ENCODE measurements at regions of chr10 and their contacts with region 1.

Region 1: DNA sequence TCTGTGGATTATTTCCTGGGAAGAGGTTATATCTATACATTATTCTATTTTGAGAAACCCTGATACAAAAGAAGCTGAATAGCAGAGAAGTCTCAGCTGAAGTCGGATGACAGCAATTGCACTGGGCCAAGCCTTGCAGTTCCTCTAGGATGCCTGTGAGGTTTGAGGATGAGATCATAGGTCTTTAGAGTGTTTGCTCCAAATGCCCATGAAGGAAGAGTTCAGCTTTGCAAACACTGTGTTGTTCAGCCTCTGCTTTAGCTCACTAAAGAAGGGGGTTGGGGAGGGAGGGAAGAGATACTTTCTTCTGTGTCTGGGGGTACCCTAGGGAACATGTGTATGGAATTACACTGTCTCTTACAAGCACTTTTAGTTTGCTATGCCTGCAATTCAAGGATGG is 282.5 kb upstream of the NRP1 start:
- DNase-seq: no peak
- H3K4me3 ChIP-seq: no peak overlapping the region
- H3K27ac ChIP-seq: no peak overlapping the region
- H3K4me1 ChIP-seq: no peaks in the 10 kb centered on the region
- H3K27me3 ChIP-seq: no peaks in the 10 kb centered on the region
- CTCF ChIP-seq: no peak

Region 2: GRCh38 chr10:32471232-32471631 is 1145.7 kb before region 1 on chr10:
- CTCF ChIA-PET with region 1: no interaction called
- POLR2A ChIA-PET with region 1: interaction called, 21 read pairs
- intact Hi-C with region 1: no loop called
- DNase-seq: no peak
- H3K4me3 ChIP-seq: no peak overlapping the region
- H3K27ac ChIP-seq: no peak overlapping the region
- H3K4me1 ChIP-seq: no peaks in the 10 kb centered on the region
- H3K27me3 ChIP-seq: no peaks in the 10 kb centered on the region
- CTCF ChIP-seq: no peak

Region 3: DNA sequence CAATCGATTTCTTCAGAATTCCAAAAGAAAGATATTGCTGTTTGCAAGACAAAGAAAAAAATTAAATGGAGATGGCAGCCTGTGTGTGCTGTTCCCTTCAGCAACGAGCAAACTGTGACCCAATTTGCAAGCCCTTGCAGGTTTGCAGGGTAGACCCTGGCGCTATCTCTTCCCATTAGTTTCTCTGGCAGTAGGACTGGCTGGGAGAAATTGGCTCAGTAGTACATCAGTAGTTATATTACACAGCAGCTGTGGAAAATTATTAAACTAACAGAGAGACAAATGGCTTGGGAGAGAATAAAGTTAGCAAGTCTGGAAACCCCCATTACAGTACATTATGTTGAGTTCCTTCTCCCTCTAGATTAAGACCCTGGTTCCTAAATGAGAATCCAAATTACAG is 542.5 kb before region 1 on chr10:
- CTCF ChIA-PET with region 1: no interaction called
- POLR2A ChIA-PET with region 1: no interaction called
- intact Hi-C with region 1: no loop called
- DNase-seq: no peak
- H3K4me3 ChIP-seq: no peak overlapping the region
- H3K27ac ChIP-seq: no peak overlapping the region
- H3K4me1 ChIP-seq: peaks cover 5% of the 10 kb centered on the region; the same call in 1 of the 2 replicates
- H3K27me3 ChIP-seq: no peaks in the 10 kb centered on the region
- CTCF ChIP-seq: no peak

Region 4: GRCh38 chr10:33365871-33366411 is 251.0 kb before region 1 on chr10:
- CTCF ChIA-PET with region 1: no interaction called
- POLR2A ChIA-PET with region 1: no interaction called
- intact Hi-C with region 1: no loop called
- DNase-seq: peak; percentile 20 to 91
- H3K4me3 ChIP-seq: no peak overlapping the region; the same call in 1 of the 2 replicates
- H3K27ac ChIP-seq: peak overlapping the region; percentile 99
- H3K4me1 ChIP-seq: peaks cover 32% of the 10 kb centered on the region
- H3K27me3 ChIP-seq: no peaks in the 10 kb centered on the region
- CTCF ChIP-seq: no peak

Region 5: DNA sequence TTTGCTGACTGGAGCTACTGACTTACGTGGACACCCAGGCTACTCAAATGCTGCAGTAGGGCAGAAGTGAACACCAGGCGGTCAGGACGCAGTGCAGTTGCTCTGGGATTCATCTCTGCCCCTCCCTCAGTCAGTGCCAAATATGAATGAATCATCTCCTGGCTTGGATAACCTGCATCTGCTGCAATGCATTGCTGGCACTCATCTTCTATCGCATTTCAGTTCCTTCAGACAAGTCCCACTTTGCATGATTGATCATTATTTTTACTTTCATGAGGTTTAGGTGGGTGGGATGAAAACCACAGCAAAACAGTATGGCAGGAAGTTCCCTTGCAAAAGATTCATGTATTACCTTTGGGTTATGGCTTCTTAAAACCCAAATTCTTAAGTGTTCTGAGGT is 57.9 kb before region 1 on chr10:
- CTCF ChIA-PET with region 1: no interaction called
- POLR2A ChIA-PET with region 1: no interaction called
- intact Hi-C with region 1: no loop called
- DNase-seq: peak; percentile 40 to 52
- H3K4me3 ChIP-seq: no peak overlapping the region
- H3K27ac ChIP-seq: no peak overlapping the region
- H3K4me1 ChIP-seq: peaks cover 8% of the 10 kb centered on the region; the same call in 1 of the 2 replicates
- H3K27me3 ChIP-seq: no peaks in the 10 kb centered on the region
- CTCF ChIP-seq: no peak

Measured in PC-9 (cell line).